Activated T-helper 1 cell treated with anti-CD3 and anti-CD28 coated beads, Interleukin-12 subunit alpha, Interleukin-12 subunit beta, Interleukin-2, Interleukin-4 antibody, amounts not matched to agents 30 ng/mL and 10 ng/mL and 1 ng/mL, durations not matched to agents 14 hours and 24 hours and 36 hours (primary cell): ENCODE measurements at regions of chr19 and their contacts with region 1.

Region 1: DNA sequence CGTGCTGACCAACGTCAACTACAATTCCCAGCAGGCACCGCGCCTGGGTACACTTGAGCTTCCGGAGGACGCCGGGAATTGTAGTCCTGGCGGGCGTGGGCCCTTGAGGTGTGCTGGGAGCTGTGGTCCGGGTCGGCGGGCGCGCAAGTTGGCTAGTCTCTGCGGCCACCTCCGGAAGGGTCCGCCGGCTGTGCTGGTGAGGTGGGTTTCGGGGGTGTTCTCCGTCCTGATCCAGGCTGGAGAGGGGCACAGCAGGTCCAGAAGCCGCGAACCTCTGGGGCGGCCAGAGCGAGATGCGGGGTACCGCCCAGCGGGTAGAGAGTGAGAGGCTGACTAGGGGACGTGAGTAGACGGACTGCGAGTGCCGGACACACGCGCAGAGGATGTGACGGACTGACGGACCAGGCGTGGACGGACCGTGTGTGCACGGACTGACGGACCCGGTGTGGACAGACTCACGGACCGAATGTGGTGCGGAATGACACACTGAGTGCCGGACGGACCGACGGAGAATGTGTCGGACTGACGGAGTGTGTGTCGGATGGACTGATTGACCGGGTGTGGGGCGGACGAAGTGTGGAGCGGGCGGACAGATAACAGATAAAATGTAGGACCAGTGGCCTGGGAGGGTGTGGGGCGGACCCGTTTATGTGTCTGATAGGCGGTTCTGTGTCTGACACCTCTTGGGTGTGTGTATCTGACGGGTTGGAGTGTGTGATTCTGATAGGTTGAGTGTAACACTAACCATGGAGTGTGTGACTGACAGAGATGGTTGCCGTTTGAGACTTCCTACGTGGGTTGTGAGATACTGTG is at the start of gene ZSCAN22:
- DNase-seq: peak; percentile 88
- H3K4me3 Mint-ChIP-seq: no peak within 1 kb of the TSS
- H3K27ac Mint-ChIP-seq: no peak within 1 kb of the TSS
- H3K4me1 Mint-ChIP-seq: peaks cover 9% of the 10 kb centered on the region
- H3K27me3 Mint-ChIP-seq: no peaks in the 10 kb centered on the region
- total RNA-seq, gene ZSCAN22: 4.7 and 4.8 TPM in 2 replicates

Region 2: DNA sequence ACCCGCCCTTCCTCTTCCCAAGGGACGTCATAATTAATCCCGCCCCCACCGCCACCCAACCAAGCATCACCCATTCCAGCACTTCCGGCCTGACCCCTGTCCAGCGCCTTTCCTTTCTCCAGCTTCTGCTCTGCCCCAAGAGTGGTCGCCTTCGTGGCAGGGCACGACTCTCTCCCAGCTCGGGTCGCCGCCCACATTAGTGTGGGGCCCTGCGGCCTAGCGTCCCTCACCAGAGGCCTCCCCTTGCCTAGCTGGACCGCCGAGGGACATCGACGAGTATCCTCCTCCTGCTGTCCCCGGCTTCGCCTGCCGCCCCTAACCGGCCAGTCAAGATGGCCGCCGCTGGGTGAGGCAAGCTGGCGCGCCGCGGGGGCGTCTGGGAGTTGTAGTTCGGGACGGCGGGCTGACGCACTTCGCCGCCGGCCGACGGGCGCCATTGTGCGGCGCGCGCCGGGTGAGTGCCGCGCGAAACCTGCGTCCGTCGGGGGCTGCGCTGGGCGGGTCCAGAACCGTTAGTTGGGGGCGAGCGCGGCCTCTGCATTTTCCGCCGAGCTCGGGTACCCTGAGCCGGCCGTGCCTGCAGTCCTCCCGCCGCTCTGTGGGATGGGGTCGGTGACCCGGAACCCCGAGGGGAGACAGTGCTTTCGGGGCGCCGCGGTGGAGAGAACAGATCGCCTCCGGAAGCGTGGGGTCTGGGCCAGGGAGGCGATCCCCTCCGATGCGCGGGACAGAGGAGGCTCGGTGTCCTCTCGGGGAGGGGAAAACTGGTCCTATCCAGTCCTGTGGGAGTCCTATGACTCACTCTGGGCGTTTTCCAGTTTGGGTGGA is 143.9 kb before region 1 on chr19 and contains the start of gene ZNF274:
- intact Hi-C with region 1: loop called (anchors 1 kb)
- DNase-seq: peak; percentile 90
- H3K4me3 Mint-ChIP-seq: peak within 1 kb of the TSS; percentile 93
- H3K27ac Mint-ChIP-seq: peak within 1 kb of the TSS; percentile 99
- H3K4me1 Mint-ChIP-seq: peaks cover 16% of the 10 kb centered on the region
- H3K27me3 Mint-ChIP-seq: no peaks in the 10 kb centered on the region
- total RNA-seq, gene ZNF274: 18.2 and 21.2 TPM in 2 replicates

Region 3: GRCh38 chr19:58212336-58213074 is 114.6 kb before region 1 on chr19:
- intact Hi-C with region 1: no loop called
- DNase-seq: no peak
- H3K4me3 Mint-ChIP-seq: no peak overlapping the region
- H3K27ac Mint-ChIP-seq: no peak overlapping the region
- H3K4me1 Mint-ChIP-seq: no peaks in the 10 kb centered on the region
- H3K27me3 Mint-ChIP-seq: no peaks in the 10 kb centered on the region

Region 4: DNA sequence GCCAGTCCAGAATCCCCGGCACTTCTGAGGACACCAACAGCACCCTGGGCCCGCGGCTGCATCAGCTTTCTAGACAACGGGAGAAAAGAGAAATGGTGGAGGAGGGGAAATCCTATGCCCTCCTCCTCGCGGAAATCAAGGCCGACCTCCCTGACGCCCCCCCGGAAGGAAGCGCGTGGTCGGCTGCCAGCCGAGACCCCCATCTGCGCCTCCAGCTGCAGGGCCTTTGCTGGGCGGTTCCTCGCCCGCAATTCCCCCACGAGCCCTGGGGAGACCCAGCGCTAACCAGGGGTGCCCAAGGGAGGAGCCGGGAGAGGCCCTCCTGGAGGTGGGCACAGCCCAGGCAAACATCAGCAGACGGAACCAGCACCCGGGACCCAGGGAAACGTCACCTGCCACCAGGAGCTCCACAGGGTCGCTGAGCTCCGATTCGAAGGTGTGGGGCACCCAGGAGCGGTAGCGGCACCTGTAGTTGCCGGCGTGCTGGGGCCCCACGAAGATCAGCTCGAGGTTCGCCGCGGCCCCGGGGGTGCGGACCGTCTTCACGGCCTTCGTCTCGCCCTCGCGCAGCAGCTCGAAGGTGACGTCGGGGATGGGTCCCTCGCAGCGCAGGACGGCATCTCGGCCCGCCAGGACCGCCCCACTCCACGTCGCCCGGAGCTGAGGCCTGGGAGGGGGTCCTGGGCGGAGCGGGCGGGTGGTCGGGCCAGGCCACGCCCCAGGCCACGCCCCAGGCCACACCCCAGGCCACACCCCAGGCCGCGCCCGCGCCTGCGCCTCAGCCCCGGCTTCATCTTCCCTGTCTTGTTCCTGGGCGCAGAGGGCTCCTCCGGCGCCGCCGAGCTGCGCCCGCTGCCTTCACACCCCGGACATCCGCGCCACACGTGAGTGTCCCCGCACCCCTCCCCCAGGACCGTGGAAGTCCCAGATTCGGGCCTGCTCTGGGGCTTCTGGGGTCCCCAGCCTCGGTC is 20.1 kb after region 1 on chr19:
- intact Hi-C with region 1: loop called (anchors 1 kb)
- DNase-seq: peak; percentile 63
- H3K4me3 Mint-ChIP-seq: peak overlapping the region; percentile 92
- H3K27ac Mint-ChIP-seq: peak overlapping the region; percentile 83
- H3K4me1 Mint-ChIP-seq: peaks cover 29% of the 10 kb centered on the region
- H3K27me3 Mint-ChIP-seq: no peaks in the 10 kb centered on the region

Region 5: GRCh38 chr19:58386576-58387337 is 59.6 kb after region 1 on chr19 and contains the start of gene RPS5:
- intact Hi-C with region 1: loop called (anchors 1 kb)
- DNase-seq: peak; percentile 95
- H3K4me3 Mint-ChIP-seq: peak within 1 kb of the TSS; percentile 93
- H3K27ac Mint-ChIP-seq: peak within 1 kb of the TSS; percentile 99
- H3K4me1 Mint-ChIP-seq: peaks cover 35% of the 10 kb centered on the region
- H3K27me3 Mint-ChIP-seq: no peaks in the 10 kb centered on the region
- total RNA-seq, gene RPS5: 1,157 and 1,161 TPM in 2 replicates

Region 6: DNA sequence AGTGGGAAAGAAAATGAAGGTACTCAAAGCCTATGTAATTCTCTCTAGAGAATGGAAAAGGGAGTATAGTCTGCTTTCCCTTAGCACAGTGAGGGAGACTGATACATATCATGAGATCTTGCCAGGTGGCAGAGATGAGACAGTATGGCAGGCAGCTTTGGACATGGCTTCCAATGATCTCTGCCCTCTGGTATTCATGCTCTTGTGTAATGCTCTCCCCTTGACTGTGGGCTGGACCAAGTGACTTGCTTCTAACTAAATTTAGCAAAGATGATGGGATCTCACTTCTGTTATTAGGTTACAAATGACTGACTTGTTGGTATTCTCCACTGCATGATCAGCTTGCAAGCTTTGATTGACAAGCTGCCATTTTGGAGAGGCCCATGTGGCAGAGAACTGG is 102.6 kb after region 1 on chr19:
- intact Hi-C with region 1: no loop called
- DNase-seq: no peak
- H3K4me3 Mint-ChIP-seq: no peak overlapping the region
- H3K27ac Mint-ChIP-seq: no peak overlapping the region
- H3K4me1 Mint-ChIP-seq: no peaks in the 10 kb centered on the region
- H3K27me3 Mint-ChIP-seq: no peaks in the 10 kb centered on the region

Region 7: GRCh38 chr19:58439576-58440554 is 112.7 kb after region 1 on chr19 and contains the start of gene ZNF132:
- intact Hi-C with region 1: loop called (anchors 1 kb)
- DNase-seq: peak; percentile 94
- H3K4me3 Mint-ChIP-seq: peak within 1 kb of the TSS; percentile 97
- H3K27ac Mint-ChIP-seq: peak within 1 kb of the TSS; percentile 98
- H3K4me1 Mint-ChIP-seq: peaks cover 24% of the 10 kb centered on the region
- H3K27me3 Mint-ChIP-seq: no peaks in the 10 kb centered on the region
- total RNA-seq, gene ZNF132: 3.4 and 3.5 TPM in 2 replicates

Region 8: GRCh38 chr19:58499021-58499927 is 172.2 kb after region 1 on chr19:
- intact Hi-C with region 1: no loop called
- DNase-seq: peak; percentile 96
- H3K4me3 Mint-ChIP-seq: peak overlapping the region; percentile 91
- H3K27ac Mint-ChIP-seq: peak overlapping the region; percentile 91
- H3K4me1 Mint-ChIP-seq: peaks cover 21% of the 10 kb centered on the region
- H3K27me3 Mint-ChIP-seq: peaks cover 7% of the 10 kb centered on the region

Region 9: GRCh38 chr19:58513694-58514563 is 186.8 kb after region 1 on chr19:
- intact Hi-C with region 1: loop called (anchors 1 kb)
- DNase-seq: peak; percentile 96
- H3K4me3 Mint-ChIP-seq: peak overlapping the region; percentile 91
- H3K27ac Mint-ChIP-seq: peak overlapping the region; percentile 96
- H3K4me1 Mint-ChIP-seq: peaks cover 20% of the 10 kb centered on the region
- H3K27me3 Mint-ChIP-seq: peaks cover 3% of the 10 kb centered on the region